ENCODE measurements at regions of chr17 and their contacts with region 1.

Region 1: GRCh38 chr17:82292251-82293154 is 19.0 kb upstream of the CSNK1D start:
- DNase-seq: peak; percentile 97 to 98
- ATAC-seq: peak; percentile 82 to 94 (median 84)
- H3K4me3 ChIP-seq: peak overlapping the region; percentile 92
- H3K27ac ChIP-seq: peak overlapping the region; percentile 99
- H3K4me1 ChIP-seq: peaks cover 40% of the 10 kb centered on the region
- H3K27me3 ChIP-seq: no peaks in the 10 kb centered on the region
- CTCF ChIP-seq: no peak

Region 2: DNA sequence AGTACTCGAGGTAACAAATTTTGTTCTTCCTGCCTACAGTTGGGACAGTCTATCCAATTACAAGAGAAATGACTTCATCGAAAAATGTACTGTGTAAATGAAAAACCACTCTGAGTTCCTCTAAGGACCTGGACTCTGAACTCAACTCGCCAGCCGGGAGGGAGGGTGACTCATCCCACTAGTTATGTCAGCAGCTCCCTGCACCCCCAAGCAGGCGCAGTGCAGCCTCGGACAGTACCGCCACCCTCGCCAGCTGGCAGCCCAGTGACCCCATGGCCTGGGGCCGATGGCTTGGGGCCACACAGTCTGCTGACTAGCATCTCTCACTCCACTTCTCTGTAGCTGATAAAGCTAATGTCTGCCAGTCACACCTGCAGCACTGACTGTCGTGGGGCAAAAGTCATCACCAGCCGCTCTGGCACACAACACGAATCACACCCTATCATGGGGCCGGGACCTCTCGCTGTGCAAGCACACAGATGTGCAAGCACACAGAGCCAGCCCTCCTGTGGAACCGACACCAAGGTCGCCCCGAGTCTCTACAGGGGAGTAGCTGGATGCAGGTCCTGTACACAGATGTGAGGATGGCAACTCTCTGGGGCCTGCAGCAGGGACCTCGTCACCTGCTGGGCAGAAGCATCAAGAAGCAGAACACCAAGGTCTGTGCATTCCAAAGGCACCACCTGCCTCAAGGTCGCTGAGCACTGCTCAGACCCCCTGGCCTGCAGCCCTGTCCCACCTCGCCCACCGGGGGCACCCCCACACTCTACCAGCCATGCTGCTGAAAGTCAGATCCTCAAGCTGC is 24.7 kb before region 1 on chr17:
- intact Hi-C with region 1: loop called (anchors 2 kb)
- DNase-seq: peak; percentile 97 to 99
- ATAC-seq: peak; percentile 92 to 97 (median 94)
- H3K4me3 ChIP-seq: peak overlapping the region; percentile 46
- H3K27ac ChIP-seq: peak overlapping the region; percentile 81
- H3K4me1 ChIP-seq: peaks cover 65% of the 10 kb centered on the region
- H3K27me3 ChIP-seq: no peaks in the 10 kb centered on the region
- CTCF ChIP-seq: no peak

Region 3: DNA sequence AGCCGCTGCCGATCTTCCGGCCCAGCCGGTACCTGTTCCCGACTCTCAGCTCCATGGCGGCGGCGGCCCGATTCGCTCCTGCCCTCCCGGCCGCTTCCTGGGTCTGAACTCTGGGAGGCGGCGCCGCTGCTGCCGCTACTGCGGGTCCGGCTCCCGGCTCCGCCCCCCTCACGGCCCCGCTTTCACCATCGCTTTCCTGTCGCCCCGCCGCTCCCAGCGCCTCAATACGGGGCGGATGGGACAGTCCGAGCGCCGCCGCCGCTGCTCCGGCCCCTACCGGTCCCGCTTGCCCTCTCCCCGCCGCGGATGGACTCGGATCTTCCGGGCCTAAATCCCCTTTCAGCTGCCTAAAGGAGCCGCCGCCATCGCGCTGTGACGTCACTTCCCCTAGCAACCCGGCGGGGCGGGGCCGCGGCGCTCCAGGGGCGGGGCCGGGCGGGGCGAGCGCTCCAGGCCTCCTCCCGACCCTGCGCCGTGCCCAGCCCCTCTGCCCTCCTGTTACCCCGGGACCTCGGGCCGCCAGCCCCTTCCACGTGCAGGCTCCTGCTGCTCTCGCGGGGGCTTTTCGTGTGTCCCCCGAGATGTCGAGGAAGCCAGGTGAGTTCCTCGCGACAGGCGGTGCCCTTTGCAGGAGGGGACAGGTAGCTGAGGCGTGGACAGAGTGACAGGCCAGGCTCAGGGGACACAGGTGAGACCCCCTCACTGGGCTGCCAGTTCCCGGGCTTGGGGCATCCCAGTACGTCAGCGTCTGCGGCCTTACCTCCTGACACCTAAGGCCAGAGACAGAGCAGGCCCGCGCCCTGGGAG is 19.0 kb before region 1 on chr17 and contains the start of gene CSNK1D:
- intact Hi-C with region 1: loop called (anchors 2 kb)
- DNase-seq: peak; percentile 91 to 95
- ATAC-seq: peak; percentile 88 to 95 (median 92)
- H3K4me3 ChIP-seq: peak within 1 kb of the TSS; percentile 83
- H3K27ac ChIP-seq: peak within 1 kb of the TSS; percentile 95
- H3K4me1 ChIP-seq: peaks cover 46% of the 10 kb centered on the region
- H3K27me3 ChIP-seq: no peaks in the 10 kb centered on the region
- CTCF ChIP-seq: no peak
- total RNA-seq, gene CSNK1D: 73.5 to 139 (median 116) TPM

Region 4: GRCh38 chr17:82434216-82434565 is 141.7 kb after region 1 on chr17:
- intact Hi-C with region 1: no loop called
- DNase-seq: no peak
- ATAC-seq: no peak
- H3K4me3 ChIP-seq: no peak overlapping the region
- H3K27ac ChIP-seq: no peak overlapping the region
- H3K4me1 ChIP-seq: no peaks in the 10 kb centered on the region
- H3K27me3 ChIP-seq: no peaks in the 10 kb centered on the region
- CTCF ChIP-seq: no peak

Measured in psoas muscle (tissue), 8 donors.